ENCODE measurements at regions of chr1 and their contacts with region 1.

Region 1: DNA sequence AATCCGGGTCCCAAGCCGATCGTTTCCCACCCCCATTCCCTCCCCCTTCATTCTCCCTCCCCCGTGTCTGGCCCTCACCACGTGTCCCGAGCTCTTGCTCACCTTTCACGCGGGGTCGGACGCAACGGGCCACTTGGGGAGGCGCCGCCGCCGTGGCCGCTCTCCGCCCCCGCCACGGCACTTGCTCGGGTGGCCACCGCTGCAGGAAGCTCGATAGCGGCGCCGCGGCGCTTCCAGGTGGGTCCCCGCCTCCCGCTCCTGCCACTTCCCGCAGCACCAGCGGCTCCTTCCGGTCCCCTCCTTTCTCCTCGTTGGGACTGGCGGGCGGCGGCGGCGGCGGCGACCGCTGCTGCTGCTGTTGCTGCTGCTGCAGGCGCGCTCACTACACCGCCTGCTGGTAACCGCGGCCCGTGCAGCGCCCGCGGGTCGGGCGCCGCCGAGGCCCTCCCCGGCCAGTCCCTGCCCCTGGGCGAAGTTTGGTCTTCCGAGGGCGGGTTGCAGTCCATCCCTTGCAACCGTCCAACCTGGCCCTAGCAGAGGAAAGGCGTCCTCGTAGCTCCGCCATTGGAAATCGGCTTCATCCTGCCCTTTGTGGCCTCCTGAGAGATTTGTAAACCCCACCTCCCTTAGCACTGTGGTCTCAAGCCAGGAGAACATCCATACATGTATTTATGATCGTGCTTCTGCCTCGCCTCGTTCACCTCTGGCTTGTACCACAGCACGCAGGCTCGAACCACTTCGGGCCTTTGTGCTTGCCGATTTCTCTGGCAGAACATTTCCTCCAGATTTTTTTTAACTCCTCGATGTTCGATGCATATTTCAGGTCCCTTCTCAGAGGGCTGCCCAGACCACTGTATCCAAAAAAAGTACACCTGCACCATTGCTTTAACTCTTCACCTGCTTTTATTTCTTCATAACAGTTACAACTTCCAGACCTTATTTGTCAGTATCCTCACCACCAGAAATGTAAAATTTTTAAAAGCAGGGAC is 996 bp upstream of the ZZZ3 start:
- DNase-seq: peak; percentile 80 to 95 (median 91)
- ATAC-seq: peak; percentile 68
- H3K4me3 ChIP-seq: peak overlapping the region; percentile 77
- H3K4me3 Mint-ChIP-seq: peak overlapping the region; percentile 91
- H3K27ac ChIP-seq: peak overlapping the region; percentile 87
- H3K27ac Mint-ChIP-seq: peak overlapping the region; percentile 94
- H3K4me1 ChIP-seq: peaks cover 15% of the 10 kb centered on the region
- H3K4me1 Mint-ChIP-seq: peaks cover 51% of the 10 kb centered on the region
- H3K27me3 ChIP-seq: no peaks in the 10 kb centered on the region
- H3K27me3 Mint-ChIP-seq: no peaks in the 10 kb centered on the region
- CTCF ChIP-seq: peak; percentile 90

Region 2: DNA sequence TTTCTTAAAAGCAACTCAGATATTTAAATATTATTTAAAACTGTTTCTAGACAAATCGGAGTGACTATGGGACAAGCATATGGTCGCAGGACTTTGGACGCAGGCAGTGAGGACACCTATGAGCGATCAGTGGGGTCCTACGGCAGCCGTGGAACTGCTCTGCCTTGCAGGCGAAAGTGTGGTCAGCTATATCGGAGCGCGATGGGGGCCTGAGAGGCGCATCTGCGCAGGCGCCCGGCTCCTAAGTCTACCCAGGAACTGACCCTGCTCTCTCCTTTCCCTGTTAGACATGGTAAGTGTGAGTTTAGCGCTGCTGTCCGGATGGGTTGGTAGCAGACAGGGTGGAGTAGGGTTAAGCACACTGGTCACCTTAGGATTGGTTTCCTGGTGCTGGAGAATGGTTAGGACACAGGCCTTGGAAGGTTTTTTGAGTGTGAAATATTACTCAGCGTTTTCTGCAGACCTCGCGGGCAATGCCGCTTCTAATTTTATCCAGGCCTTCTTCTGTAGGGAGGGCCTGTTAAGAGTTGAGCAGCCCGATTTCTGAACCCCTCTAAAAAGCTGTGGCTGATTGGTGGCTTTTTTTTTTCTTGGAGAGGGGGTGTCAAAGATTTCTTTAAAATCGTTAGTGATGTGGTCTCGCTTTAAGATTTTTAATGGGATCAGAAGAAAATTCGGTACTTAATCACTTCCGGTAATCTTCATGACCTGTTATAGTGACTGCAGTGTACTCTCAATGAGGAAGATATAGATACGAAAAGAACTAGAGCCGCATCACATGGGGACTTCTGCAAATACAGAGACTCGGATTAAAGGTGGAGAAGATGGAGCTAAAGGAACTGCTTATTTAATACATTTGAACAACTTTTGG is 1897.2 kb before region 1 on chr1 and contains the start of gene RABGGTB:
- CTCF ChIA-PET with region 1: no interaction called
- POLR2A ChIA-PET with region 1: interaction called, 3 read pairs
- intact Hi-C with region 1: loop called in 1 of 2 experiments (anchors 10 kb)
- DNase-seq: peak; percentile 89 to 97 (median 92)
- ATAC-seq: peak; percentile 95
- H3K4me3 ChIP-seq: peak within 1 kb of the TSS; percentile 67
- H3K4me3 Mint-ChIP-seq: peak within 1 kb of the TSS; percentile 98
- H3K27ac ChIP-seq: peak within 1 kb of the TSS; percentile 84 to 86
- H3K27ac Mint-ChIP-seq: peak within 1 kb of the TSS; percentile 92
- H3K4me1 ChIP-seq: peaks cover 26% of the 10 kb centered on the region
- H3K4me1 Mint-ChIP-seq: peaks cover 57% of the 10 kb centered on the region
- H3K27me3 ChIP-seq: no peaks in the 10 kb centered on the region
- H3K27me3 Mint-ChIP-seq: no peaks in the 10 kb centered on the region
- CTCF ChIP-seq: no peak
- total RNA-seq, gene RABGGTB: 199 to 200 TPM

Region 3: DNA sequence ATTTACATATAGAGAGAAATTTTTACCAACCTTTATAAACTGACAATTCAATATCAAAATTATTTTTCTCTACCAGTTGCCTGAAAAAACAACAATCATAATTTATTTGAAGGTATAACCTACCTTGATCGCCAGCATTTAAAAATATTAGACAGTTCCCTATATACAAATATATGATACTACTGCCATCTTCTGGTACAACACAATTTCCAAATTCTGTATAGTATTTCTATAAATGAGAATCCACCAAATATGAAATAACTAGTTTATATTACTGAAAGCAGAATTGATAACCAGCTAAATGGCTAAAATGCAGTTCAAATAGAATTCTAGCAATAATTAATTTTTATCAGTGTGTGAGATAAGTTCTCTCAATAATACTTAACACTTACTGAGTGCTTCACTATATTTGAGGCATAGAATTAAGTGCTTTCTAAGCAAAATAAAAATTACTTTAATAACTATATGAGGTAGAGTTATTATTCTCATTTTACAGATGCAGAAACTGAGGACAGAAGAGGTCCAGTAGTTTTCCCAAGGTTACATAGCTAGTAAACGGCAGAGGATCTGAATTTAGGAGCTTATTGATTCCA is 539.8 kb before region 1 on chr1:
- CTCF ChIA-PET with region 1: no interaction called
- POLR2A ChIA-PET with region 1: no interaction called
- intact Hi-C with region 1: loop called (anchors 5 to 10 kb)
- DNase-seq: peak in 3 of 14 experiments; percentile 27 to 29 (median 28)
- ATAC-seq: no peak
- H3K4me3 ChIP-seq: no peak overlapping the region
- H3K4me3 Mint-ChIP-seq: no peak overlapping the region
- H3K27ac ChIP-seq: no peak overlapping the region
- H3K27ac Mint-ChIP-seq: no peak overlapping the region
- H3K4me1 ChIP-seq: no peaks in the 10 kb centered on the region
- H3K4me1 Mint-ChIP-seq: peaks cover 8% of the 10 kb centered on the region
- H3K27me3 ChIP-seq: no peaks in the 10 kb centered on the region
- H3K27me3 Mint-ChIP-seq: no peaks in the 10 kb centered on the region
- CTCF ChIP-seq: peak; percentile 53

Region 4: DNA sequence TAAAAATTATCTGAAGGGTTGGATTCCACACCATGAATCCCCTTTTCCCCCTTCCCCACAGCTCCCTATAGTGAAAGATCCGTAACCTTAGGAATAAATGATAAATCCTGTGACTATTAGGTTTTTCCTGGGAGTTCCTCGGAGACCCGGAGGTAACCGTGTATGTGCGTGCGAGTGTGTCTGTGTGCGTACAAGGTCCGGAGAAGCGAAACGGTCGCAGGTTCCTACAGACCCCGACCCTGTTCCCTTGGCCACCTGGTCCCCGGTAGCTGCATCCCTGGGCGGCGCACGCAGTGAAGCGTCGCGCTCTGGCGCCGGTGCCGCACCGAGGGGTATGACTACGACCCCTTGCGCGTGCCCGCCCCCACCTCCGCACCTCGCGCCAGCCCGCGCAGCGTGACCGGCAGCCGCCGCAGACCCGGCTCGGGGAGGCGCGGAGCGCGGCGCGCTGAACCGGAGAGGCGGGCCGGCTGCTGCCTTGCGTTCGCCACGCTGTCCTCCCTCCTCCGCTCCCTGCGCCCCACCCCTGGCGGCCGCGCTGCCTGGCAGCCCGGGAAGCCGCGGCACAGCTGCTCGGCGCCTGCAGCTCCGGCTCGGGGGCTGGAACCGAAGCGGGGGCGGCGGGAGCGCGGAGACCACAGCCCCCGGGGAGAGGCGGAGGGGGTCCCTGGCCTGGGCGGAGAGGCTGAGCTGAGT is 401.8 kb before region 1 on chr1 and contains the start of gene AK5:
- CTCF ChIA-PET with region 1: no interaction called
- POLR2A ChIA-PET with region 1: interaction called, 11 read pairs
- intact Hi-C with region 1: no loop called
- DNase-seq: peak; percentile 13 to 71 (median 45)
- ATAC-seq: peak; percentile 73
- H3K4me3 ChIP-seq: peak within 1 kb of the TSS; percentile 69
- H3K4me3 Mint-ChIP-seq: peak within 1 kb of the TSS; percentile 88
- H3K27ac ChIP-seq: peak within 1 kb of the TSS in 1 of 2 donors; percentile 51
- H3K27ac Mint-ChIP-seq: peak within 1 kb of the TSS; percentile 62
- H3K4me1 ChIP-seq: peaks cover 33% of the 10 kb centered on the region
- H3K4me1 Mint-ChIP-seq: peaks cover 55% of the 10 kb centered on the region
- H3K27me3 ChIP-seq: peaks cover 0 to 11% of the 10 kb centered on the region in 2 experiments
- H3K27me3 Mint-ChIP-seq: no peaks in the 10 kb centered on the region
- CTCF ChIP-seq: no peak
- total RNA-seq, gene AK5: 32.0 TPM

Region 5: DNA sequence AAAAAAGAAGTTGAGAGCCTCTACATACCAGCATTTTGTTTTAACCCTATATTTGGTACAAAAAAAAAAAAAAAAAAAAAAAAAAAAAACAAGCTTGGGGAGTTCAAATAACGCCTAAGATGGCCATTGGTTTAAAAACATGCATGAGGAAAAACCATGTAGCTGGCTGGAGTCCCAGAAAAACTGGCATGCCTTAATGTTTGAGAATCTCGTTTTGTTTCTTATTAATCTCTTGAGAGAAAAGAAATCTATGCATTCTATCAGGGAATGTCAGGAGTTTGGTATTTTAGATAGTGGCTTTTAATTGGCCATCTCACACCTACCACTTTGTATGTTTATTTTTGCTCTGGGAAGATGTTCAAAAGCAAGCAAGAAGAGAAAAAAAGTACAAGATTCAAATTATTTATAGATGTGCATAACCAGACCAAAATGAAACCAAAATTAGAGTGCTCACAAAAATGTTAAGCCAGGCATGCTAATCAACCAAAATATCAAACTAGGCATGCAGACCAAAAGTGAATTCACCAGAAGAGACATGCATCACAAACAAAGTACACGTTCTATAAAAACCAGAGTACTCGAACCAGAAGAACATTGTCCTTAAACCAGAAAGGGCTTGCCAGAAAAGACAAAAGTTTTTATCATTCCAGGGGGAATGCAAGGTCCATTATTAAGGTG is 245.1 kb before region 1 on chr1:
- CTCF ChIA-PET with region 1: no interaction called
- POLR2A ChIA-PET with region 1: interaction called, 3 read pairs
- intact Hi-C with region 1: loop called in 1 of 2 experiments (anchors 10 kb)
- DNase-seq: peak in 1 of 14 experiments; percentile 26
- ATAC-seq: no peak
- H3K4me3 ChIP-seq: no peak overlapping the region
- H3K4me3 Mint-ChIP-seq: peak overlapping the region; percentile 75
- H3K27ac ChIP-seq: no peak overlapping the region
- H3K27ac Mint-ChIP-seq: peak overlapping the region; percentile 74
- H3K4me1 ChIP-seq: peaks cover 7% of the 10 kb centered on the region
- H3K4me1 Mint-ChIP-seq: peaks cover 35% of the 10 kb centered on the region
- H3K27me3 ChIP-seq: no peaks in the 10 kb centered on the region
- H3K27me3 Mint-ChIP-seq: no peaks in the 10 kb centered on the region
- CTCF ChIP-seq: no peak

Region 6: GRCh38 chr1:77718181-77718580 is 34.7 kb after region 1 on chr1:
- CTCF ChIA-PET with region 1: no interaction called
- POLR2A ChIA-PET with region 1: no interaction called
- intact Hi-C with region 1: no loop called
- DNase-seq: no peak
- ATAC-seq: no peak
- H3K4me3 ChIP-seq: no peak overlapping the region
- H3K4me3 Mint-ChIP-seq: no peak overlapping the region
- H3K27ac ChIP-seq: no peak overlapping the region
- H3K27ac Mint-ChIP-seq: no peak overlapping the region
- H3K4me1 ChIP-seq: no peaks in the 10 kb centered on the region
- H3K4me1 Mint-ChIP-seq: no peaks in the 10 kb centered on the region
- H3K27me3 ChIP-seq: no peaks in the 10 kb centered on the region
- H3K27me3 Mint-ChIP-seq: no peaks in the 10 kb centered on the region
- CTCF ChIP-seq: no peak

Region 7: GRCh38 chr1:77759071-77760028 is 75.9 kb after region 1 on chr1 and contains the start of gene USP33:
- CTCF ChIA-PET with region 1: interaction called, 6 read pairs
- POLR2A ChIA-PET with region 1: interaction called, 10 read pairs
- intact Hi-C with region 1: loop called (anchors 2 to 10 kb)
- DNase-seq: peak; percentile 86 to 97 (median 92)
- ATAC-seq: peak; percentile 95
- H3K4me3 ChIP-seq: peak within 1 kb of the TSS; percentile 80
- H3K4me3 Mint-ChIP-seq: peak within 1 kb of the TSS; percentile 90
- H3K27ac ChIP-seq: peak within 1 kb of the TSS; percentile 29 to 88
- H3K27ac Mint-ChIP-seq: peak within 1 kb of the TSS; percentile 87
- H3K4me1 ChIP-seq: peaks cover 23% of the 10 kb centered on the region
- H3K4me1 Mint-ChIP-seq: peaks cover 57% of the 10 kb centered on the region
- H3K27me3 ChIP-seq: no peaks in the 10 kb centered on the region
- H3K27me3 Mint-ChIP-seq: no peaks in the 10 kb centered on the region
- CTCF ChIP-seq: no peak
- total RNA-seq, gene USP33: 69.7 to 71.6 TPM

Region 8: GRCh38 chr1:77832901-77833300 is 149.4 kb after region 1 on chr1:
- CTCF ChIA-PET with region 1: no interaction called
- POLR2A ChIA-PET with region 1: no interaction called
- intact Hi-C with region 1: no loop called
- DNase-seq: no peak
- ATAC-seq: no peak
- H3K4me3 ChIP-seq: no peak overlapping the region
- H3K4me3 Mint-ChIP-seq: no peak overlapping the region
- H3K27ac ChIP-seq: no peak overlapping the region
- H3K27ac Mint-ChIP-seq: no peak overlapping the region
- H3K4me1 ChIP-seq: no peaks in the 10 kb centered on the region
- H3K4me1 Mint-ChIP-seq: peaks cover 10% of the 10 kb centered on the region
- H3K27me3 ChIP-seq: no peaks in the 10 kb centered on the region
- H3K27me3 Mint-ChIP-seq: no peaks in the 10 kb centered on the region
- CTCF ChIP-seq: no peak

Region 9: GRCh38 chr1:77978969-77979876 is 295.8 kb after region 1 on chr1 and contains the start of gene FUBP1:
- CTCF ChIA-PET with region 1: interaction called, 7 read pairs
- POLR2A ChIA-PET with region 1: interaction called, 42 read pairs
- intact Hi-C with region 1: loop called (anchors 2 to 10 kb)
- DNase-seq: peak; percentile 91 to 99 (median 93)
- ATAC-seq: peak; percentile 75
- H3K4me3 ChIP-seq: peak within 1 kb of the TSS; percentile 82
- H3K4me3 Mint-ChIP-seq: no peak within 1 kb of the TSS
- H3K27ac ChIP-seq: peak within 1 kb of the TSS; percentile 99
- H3K27ac Mint-ChIP-seq: no peak within 1 kb of the TSS
- H3K4me1 ChIP-seq: peaks cover 33% of the 10 kb centered on the region
- H3K4me1 Mint-ChIP-seq: peaks cover 44% of the 10 kb centered on the region
- H3K27me3 ChIP-seq: no peaks in the 10 kb centered on the region
- H3K27me3 Mint-ChIP-seq: no peaks in the 10 kb centered on the region
- CTCF ChIP-seq: peak; percentile 70
- total RNA-seq, gene FUBP1: 196 to 202 TPM